ENCODE measurements at regions of chr15 and their contacts with region 1.

Region 1: DNA sequence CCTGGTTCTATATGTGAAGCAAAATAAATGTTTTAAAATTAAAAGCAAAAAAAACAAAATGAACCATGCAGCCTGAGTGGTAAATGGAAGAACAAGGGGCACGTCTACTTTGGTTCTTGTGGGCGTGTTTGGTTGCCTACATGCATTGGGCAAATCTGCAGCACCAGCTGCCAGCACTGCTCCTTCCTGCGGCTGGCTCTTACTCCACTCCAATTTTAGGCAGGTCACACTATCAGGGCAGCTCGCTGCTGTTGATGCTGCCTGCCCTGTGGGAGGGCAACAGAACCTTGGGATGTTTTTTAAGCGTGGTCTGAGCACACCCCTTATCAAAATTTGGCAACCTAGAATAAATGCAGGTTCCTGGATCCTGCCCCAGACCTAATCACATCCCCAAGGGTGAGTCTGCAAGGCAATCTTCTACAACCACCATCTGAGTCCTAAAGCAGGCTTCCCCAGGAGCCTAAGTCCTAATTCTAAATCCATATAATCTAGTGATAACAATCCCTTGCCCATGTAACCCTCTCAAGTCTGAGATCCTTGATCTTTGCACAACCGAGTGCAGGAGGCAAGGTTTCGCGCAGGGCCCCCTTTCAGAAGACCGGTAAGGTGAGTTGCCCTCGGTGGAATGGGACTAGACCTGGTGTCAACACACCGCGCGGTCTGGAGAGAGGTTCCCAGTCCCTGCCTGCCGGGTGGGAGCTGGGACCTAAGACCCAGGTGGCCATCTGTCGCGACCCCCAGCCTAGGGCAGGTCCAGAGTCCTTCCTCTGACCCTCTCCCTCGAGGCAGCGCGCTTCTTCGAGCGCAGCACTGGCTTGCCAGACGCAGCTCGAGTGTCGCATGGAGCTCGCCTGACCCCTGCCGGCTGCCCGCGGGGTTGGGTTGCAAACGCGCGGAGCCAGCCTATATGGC is 15.9 kb downstream of the IVD start:
- H3K4me3 Mint-ChIP-seq: peak overlapping the region; percentile 32
- H3K27ac Mint-ChIP-seq: no peak overlapping the region
- H3K4me1 Mint-ChIP-seq: peaks cover 25% of the 10 kb centered on the region
- H3K27me3 Mint-ChIP-seq: peaks cover 6% of the 10 kb centered on the region

Region 2: GRCh38 chr15:40217159-40217824 is 204.2 kb before region 1 on chr15:
- intact Hi-C with region 1: loop called (anchors 5 kb)
- H3K4me3 Mint-ChIP-seq: no peak overlapping the region
- H3K27ac Mint-ChIP-seq: no peak overlapping the region
- H3K4me1 Mint-ChIP-seq: no peaks in the 10 kb centered on the region
- H3K27me3 Mint-ChIP-seq: no peaks in the 10 kb centered on the region

Region 3: DNA sequence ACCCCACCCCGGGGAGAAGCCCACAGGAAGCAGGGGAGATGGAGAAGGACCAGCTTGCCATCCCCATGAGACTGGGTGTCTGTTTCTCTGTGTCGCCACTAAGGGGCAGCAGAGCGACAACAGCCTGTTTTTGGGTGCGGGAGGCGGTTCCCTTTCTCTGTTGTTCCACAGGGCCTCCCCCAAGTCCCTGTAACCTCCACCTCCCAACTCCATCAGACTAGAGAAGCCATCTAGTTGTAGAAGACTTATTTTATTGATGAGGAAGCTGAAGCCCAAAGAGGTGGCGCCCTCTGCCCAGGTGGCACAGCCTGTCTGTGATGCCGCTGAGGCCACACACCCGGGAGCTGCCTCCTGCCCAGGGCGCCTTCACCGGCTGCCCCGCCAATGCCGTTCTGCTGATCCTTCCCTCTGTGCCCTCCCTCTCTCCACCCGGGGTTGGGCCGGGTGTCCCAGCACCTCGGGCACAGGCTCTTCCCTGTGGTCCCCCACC is 76.8 kb before region 1 on chr15:
- intact Hi-C with region 1: loop called (anchors 1 kb)
- H3K4me3 Mint-ChIP-seq: no peak overlapping the region
- H3K27ac Mint-ChIP-seq: no peak overlapping the region
- H3K4me1 Mint-ChIP-seq: peaks cover 42% of the 10 kb centered on the region
- H3K27me3 Mint-ChIP-seq: peaks cover 2% of the 10 kb centered on the region

Region 4: DNA sequence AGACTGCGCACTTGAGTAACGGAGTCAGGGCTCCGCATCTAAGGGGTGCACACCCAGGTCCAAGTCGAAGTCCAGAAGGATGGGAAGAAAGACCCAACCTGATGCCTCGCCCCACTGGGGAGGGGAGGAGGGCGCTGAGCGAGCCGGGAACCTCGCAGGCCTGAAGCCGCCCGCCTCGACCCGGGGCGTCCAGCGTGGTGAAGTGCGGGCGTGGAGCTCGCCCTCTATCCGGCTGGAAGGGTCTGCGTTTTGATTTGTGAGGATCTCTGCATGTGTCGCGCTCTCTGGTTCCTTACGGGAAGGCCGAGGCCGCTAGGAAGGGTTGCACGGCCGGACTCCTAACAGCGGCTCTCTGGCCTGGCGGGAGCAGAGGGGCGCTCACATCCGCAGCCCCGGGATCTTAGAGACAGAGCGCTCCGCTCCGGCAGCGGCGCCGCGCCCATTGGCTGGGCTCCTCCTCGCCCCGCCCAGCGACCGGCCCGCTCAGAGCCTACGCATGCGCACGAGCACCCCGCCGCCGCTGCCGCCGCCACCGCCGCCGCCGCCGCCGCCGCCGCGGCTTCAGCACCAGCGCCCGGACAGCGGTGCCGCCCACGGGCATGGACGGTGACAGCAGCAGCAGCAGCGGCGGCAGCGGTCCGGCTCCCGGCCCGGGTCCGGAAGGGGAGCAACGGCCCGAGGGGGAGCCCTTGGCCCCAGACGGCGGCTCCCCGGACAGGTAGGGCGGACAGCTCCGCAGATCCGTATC is 63.6 kb before region 1 on chr15 and contains the start of gene DISP2:
- intact Hi-C with region 1: no loop called
- H3K4me3 Mint-ChIP-seq: peak within 1 kb of the TSS; percentile 75
- H3K27ac Mint-ChIP-seq: no peak within 1 kb of the TSS
- H3K4me1 Mint-ChIP-seq: peaks cover 21% of the 10 kb centered on the region
- H3K27me3 Mint-ChIP-seq: peaks cover 49% of the 10 kb centered on the region

Region 5: DNA sequence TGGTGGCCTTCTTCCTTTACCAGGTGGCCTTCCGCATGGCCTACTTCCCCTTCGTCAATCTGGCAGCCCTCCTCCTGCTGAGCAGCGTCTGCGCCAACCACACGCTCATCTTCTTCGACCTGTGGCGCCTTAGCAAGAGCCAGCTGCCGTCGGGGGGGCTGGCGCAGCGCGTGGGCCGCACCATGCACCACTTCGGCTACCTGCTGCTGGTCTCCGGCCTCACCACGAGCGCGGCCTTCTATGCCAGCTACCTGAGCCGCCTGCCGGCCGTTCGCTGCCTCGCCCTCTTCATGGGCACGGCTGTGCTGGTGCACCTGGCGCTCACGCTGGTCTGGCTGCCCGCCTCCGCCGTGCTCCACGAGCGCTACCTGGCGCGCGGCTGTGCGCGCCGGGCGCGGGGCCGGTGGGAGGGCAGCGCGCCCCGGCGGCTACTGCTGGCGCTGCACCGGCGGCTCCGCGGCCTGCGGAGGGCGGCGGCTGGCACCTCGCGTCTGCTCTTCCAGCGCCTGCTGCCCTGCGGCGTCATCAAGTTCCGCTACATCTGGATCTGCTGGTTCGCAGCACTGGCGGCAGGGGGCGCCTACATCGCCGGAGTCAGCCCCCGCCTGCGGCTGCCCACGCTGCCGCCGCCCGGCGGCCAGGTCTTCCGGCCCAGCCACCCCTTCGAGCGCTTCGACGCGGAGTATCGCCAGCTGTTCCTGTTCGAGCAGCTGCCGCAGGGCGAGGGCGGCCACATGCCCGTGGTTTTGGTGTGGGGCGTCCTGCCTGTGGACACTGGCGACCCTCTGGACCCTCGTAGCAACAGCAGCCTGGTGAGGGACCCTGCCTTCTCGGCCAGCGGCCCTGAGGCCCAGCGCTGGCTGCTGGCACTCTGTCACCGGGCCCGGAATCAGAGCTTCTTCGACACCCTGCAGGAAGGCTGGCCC is 53.6 kb before region 1 on chr15:
- intact Hi-C with region 1: loop called (anchors 1 kb)
- H3K4me3 Mint-ChIP-seq: peak overlapping the region; percentile 73
- H3K27ac Mint-ChIP-seq: peak overlapping the region; percentile 69
- H3K4me1 Mint-ChIP-seq: peaks cover 39% of the 10 kb centered on the region
- H3K27me3 Mint-ChIP-seq: peaks cover 15% of the 10 kb centered on the region

Region 6: DNA sequence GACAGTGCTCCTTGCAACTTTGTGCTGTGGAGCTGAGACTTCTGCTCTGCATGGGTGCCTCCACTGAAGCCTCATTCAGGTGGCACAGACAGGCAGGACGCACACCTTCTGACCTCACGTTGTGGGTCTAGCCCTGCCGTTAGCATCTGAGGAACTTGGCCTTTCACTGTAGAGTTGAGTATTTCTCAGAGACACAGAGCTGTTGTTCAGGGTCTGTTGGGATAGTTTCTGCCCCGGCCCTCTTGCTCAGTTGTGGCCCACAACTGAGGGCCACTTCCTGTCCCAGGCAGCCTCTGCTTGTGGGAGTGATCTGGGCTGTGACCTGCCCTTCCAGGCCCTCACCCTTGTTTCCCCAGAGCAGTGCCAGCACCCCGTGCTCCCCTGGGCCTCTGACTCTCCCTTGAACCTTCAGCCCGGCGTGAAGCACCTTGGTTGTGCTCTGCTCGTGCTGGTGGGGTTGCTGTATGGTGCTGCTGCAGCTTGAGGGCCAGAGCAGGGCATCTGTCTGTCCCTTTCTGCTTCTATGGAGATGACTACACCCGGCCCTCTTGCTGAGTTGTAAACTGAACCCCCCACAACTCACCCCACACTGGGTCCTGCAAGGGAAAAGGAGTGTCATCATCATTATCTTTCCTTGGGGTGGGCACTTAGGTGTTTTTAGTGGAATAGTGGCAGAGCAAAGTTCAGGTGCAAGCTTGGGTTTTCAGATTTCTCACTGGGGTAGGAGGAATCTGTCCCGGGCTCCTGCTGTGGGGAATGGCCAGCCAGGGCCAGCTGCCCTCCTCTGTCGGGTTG is 31.0 kb after region 1 on chr15:
- intact Hi-C with region 1: no loop called
- H3K4me3 Mint-ChIP-seq: no peak overlapping the region
- H3K27ac Mint-ChIP-seq: no peak overlapping the region
- H3K4me1 Mint-ChIP-seq: peaks cover 77% of the 10 kb centered on the region
- H3K27me3 Mint-ChIP-seq: no peaks in the 10 kb centered on the region